Panc1 (cell line): ENCODE measurements at regions of chr4 and their contacts with region 1.

Region 1: DNA sequence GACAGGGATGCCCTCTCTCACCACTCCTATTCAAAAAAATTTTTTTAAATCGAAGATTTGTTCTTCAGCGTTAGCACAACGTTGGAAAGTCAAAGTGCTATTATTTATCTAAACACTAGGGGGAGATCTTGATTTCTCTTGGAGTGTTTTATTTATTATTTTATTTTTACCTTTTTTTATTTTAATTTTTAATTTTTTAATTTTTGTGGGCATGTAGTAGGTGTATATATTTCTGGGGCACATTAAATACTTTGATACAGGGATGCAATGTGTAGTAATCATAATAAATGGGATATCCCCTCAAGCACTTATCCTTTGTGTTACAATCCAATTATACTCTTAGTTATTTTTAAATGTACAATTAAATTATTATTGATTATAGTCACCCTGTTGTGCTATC is 37.4 kb upstream of the SLC10A4 start:
- DNase-seq: no peak
- ATAC-seq: no peak
- H3K4me3 ChIP-seq: no peak overlapping the region
- H3K27ac ChIP-seq: no peak overlapping the region
- H3K4me1 ChIP-seq: no peaks in the 10 kb centered on the region
- H3K27me3 ChIP-seq: no peaks in the 10 kb centered on the region
- CTCF ChIP-seq: peak; percentile 56; the same call in 1 of the 2 replicates

Region 2: GRCh38 chr4:47972181-47972580 is 473.5 kb before region 1 on chr4:
- CTCF ChIA-PET with region 1: no interaction called
- POLR2A ChIA-PET with region 1: no interaction called
- in situ Hi-C with region 1: no loop called
- intact Hi-C with region 1: no loop called
- DNase-seq: no peak
- ATAC-seq: no peak
- H3K4me3 ChIP-seq: no peak overlapping the region
- H3K27ac ChIP-seq: no peak overlapping the region
- H3K4me1 ChIP-seq: no peaks in the 10 kb centered on the region
- H3K27me3 ChIP-seq: no peaks in the 10 kb centered on the region
- CTCF ChIP-seq: no peak

Region 3: DNA sequence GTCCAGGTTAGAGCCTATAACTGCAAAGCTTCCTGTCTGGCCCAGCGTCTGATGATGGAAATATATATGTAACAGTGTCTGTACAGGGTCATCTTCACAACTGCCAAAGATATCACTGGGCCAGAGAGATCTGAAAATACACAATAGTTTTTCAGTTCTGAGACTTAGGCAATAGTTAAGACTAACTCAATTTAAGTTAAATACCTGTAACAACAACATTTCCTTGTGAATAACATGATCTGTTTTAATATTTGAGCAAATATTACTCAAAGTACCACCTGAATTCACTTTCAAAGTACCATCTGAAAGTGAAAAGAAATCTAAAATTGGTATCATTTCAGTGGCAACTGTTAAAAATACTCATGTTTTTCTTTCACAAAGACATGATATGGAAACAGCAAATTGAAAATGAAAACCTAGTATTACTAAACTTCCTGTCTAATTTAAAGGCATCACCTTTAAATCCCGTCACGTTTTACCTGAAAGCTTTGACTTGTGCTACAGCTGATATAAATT is 53.9 kb after region 1 on chr4:
- CTCF ChIA-PET with region 1: no interaction called
- POLR2A ChIA-PET with region 1: no interaction called
- in situ Hi-C with region 1: no loop called
- intact Hi-C with region 1: loop called (anchors 10 kb)
- DNase-seq: no peak
- ATAC-seq: no peak
- H3K4me3 ChIP-seq: no peak overlapping the region
- H3K27ac ChIP-seq: no peak overlapping the region
- H3K4me1 ChIP-seq: no peaks in the 10 kb centered on the region
- H3K27me3 ChIP-seq: no peaks in the 10 kb centered on the region
- CTCF ChIP-seq: no peak